GM10248 (cell line): ENCODE measurements at regions of chr11 and their contacts with region 1.

Region 1: GRCh38 chr11:120801801-120802689 is 221.9 kb upstream of the TBCEL start:
- DNase-seq: peak; percentile 76
- CTCF ChIP-seq: peak; percentile 74

Region 2: DNA sequence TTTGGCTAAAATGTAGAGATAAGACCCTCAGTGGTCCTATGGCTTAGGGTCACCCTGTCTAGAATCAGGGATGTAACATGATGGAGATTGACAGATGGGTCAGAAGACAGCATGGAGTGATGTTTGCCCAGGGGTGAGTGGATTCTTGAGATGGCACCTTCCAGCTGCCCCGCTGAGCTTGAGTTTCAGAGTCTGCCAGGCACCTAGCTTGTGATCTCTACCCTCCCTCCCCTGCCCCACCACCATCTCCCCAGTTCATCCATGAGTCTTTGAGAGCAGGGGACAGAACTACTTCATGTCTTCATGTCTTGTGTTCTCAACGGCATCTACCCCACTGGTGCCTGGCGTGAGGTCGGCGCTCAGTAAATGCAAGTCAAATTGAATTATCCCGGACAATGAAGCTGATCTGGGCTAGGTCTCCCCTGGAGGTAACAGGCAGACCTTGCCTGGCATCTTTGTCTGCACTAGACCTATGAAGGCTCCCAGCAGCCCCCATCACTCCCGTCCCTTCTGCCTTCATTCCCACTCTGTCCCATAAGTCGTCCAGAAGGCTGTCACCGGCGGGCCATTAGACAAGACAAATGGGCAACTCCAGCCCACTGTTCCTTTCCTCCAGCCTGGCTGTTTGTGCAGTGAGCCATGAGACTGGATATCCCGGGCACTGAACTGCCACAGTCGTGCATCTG is 17.3 kb before region 1 on chr11:
- CTCF ChIA-PET with region 1: interaction called, 38 read pairs
- POLR2A ChIA-PET with region 1: no interaction called
- DNase-seq: no peak
- CTCF ChIP-seq: no peak

Region 3: GRCh38 chr11:120842195-120842594 is 40.1 kb after region 1 on chr11:
- CTCF ChIA-PET with region 1: interaction called, 15 read pairs
- POLR2A ChIA-PET with region 1: no interaction called
- DNase-seq: no peak
- CTCF ChIP-seq: no peak

Region 4: DNA sequence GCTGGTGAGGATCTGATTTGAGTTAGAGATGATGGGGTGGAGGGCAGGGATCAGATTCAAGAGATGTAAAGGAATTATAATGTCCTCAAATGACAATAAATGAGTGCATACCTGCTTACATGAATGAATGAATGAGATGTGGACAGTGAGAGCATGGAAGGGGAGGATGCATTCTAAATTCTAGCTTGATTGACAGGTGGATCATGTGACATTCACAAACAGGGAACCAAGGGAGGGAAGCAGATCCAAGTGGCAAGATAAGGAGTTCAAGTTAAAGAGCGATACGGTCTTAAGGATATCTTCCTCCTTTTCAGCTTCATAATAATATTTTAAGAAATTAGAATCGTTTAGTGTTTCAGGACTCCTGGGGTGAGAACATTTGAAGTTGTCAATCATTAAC is 51.4 kb after region 1 on chr11:
- CTCF ChIA-PET with region 1: no interaction called
- POLR2A ChIA-PET with region 1: no interaction called
- DNase-seq: no peak
- CTCF ChIP-seq: no peak

Region 5: GRCh38 chr11:121023848-121024751 is 222.1 kb after region 1 on chr11 and contains the start of gene TBCEL:
- CTCF ChIA-PET with region 1: no interaction called
- POLR2A ChIA-PET with region 1: no interaction called
- DNase-seq: peak; percentile 96
- CTCF ChIP-seq: no peak